ENCODE measurements at regions of chr9 and their contacts with region 1.

Region 1: DNA sequence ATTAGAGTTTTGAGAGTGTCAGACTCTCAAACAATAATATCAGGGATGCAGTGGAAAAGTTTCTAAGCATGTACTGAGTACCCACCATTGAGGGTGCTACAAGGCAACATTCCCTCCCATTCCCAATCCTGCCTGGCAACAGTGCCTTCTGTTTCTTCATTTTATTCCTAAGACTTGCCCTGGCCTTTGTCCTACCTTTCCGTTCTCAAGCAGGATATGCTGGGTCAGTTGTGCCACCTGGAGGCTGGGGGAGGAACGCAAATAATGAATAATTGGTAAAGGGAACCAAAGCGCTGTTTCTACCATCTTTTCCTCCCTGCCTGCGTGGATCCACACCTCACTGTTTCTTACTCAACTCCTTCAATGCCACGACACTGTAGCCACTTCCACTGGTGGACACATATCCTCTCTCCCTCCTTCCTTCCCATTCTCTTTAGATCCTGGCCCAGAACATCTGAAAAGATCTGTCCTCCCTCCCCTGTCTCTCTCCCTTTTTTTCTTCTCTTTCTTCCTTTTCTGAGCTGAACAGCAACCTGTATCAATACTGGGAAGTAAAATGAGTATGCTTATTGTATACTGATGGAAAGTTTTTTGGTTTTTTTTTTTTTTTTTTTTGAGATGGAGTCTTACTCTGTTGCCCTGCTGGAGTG is 149.5 kb downstream of the C9orf152 start:
- DNase-seq: peak; percentile 82
- H3K4me3 ChIP-seq: no peak overlapping the region
- H3K27ac ChIP-seq: peak overlapping the region; percentile 30
- H3K4me1 ChIP-seq: peaks cover 30% of the 10 kb centered on the region
- H3K27me3 ChIP-seq: no peaks in the 10 kb centered on the region
- CTCF ChIP-seq: peak; percentile 37 to 46
- POLR2A ChIP-seq: peak; percentile 31

Region 2: GRCh38 chr9:109953813-109954497 is 104.5 kb before region 1 on chr9:
- CTCF ChIA-PET with region 1: no interaction called
- POLR2A ChIA-PET with region 1: no interaction called
- dilution Hi-C with region 1: no loop called
- intact Hi-C with region 1: no loop called
- DNase-seq: no peak
- H3K4me3 ChIP-seq: no peak overlapping the region
- H3K27ac ChIP-seq: no peak overlapping the region
- H3K4me1 ChIP-seq: no peaks in the 10 kb centered on the region
- H3K27me3 ChIP-seq: no peaks in the 10 kb centered on the region
- CTCF ChIP-seq: peak in 1 of 2 donors; percentile 7
- POLR2A ChIP-seq: no peak

Region 3: DNA sequence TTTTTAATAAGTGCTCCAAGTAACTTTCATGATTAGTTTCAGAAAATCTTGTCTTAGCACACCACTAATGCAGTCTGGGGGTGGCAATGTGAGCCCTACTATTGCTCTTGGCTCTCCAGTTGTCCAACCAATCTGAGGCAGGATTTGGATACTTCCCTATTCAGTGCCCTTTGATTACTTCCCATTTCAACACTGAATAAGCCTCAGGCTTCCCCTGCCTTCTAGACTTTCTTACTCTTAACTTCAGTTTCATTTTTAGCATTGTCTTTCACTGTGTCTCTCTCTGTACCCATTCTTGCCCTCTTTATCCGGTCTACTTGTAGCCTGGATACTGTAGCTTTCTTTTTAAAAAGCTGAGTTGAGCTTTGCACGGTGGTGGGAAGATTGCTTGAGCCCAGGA is 36.5 kb before region 1 on chr9:
- CTCF ChIA-PET with region 1: no interaction called
- POLR2A ChIA-PET with region 1: no interaction called
- dilution Hi-C with region 1: no loop called
- intact Hi-C with region 1: loop called (anchors 1 kb)
- DNase-seq: peak; percentile 54
- H3K4me3 ChIP-seq: no peak overlapping the region
- H3K27ac ChIP-seq: no peak overlapping the region
- H3K4me1 ChIP-seq: peaks cover 16% of the 10 kb centered on the region
- H3K27me3 ChIP-seq: no peaks in the 10 kb centered on the region
- CTCF ChIP-seq: no peak
- POLR2A ChIP-seq: no peak